ENCODE measurements at regions of chr3 and their contacts with region 1.

Region 1: DNA sequence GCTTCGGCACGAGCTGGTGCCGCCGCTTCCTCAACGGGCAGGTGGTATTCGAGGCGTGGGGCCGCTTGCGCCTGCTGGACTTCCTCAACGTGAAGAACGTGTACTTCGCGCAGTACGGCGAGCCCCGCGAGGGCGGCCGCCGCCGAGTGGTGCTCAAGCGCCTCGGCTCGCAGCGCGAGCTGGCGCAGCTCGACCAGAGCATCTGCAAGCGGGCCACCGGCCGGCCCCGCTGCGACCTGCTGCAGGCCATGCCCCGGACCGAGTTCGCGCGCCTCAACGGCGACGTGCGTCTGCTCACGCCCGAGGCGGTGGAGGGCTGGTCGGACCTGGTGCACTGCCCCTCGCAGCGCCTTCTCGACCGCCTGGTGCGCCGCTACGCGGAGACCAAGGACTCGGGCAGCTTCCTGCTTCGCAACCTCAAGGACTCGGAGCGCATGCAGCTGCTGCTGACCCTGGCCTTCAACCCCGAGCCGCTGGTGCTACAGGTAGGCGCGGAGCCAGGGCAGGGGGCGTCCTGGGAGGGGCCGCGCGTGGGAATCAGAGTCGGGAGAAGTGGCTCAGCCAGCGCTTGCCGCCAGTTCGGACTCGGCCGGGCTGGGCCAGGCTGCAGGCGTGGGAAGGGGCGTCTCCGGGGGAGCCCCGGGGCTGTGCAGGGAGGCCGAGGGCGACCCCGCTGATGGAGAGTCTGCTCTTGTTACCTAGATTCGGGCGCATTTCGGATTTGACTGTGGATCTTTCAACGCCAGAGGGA is 1.1 kb downstream of the DIPK2A start:
- DNase-seq: peak; percentile 49 to 90 (median 78)
- ATAC-seq: peak in 3 of 4 donors; percentile 15 to 56 (median 50)
- H3K4me3 ChIP-seq: peak overlapping the region; percentile 82 to 97 (median 88)
- H3K27ac ChIP-seq: peak overlapping the region; percentile 89 to 99 (median 96)
- H3K4me1 ChIP-seq: peaks cover 0 to 40% (median 17%) of the 10 kb centered on the region in 12 donors
- H3K27me3 ChIP-seq: no peaks in the 10 kb centered on the region
- CTCF ChIP-seq: peak in 11 of 12 donors; percentile 22 to 68 (median 45)
- POLR2A ChIP-seq: no peak

Region 2: DNA sequence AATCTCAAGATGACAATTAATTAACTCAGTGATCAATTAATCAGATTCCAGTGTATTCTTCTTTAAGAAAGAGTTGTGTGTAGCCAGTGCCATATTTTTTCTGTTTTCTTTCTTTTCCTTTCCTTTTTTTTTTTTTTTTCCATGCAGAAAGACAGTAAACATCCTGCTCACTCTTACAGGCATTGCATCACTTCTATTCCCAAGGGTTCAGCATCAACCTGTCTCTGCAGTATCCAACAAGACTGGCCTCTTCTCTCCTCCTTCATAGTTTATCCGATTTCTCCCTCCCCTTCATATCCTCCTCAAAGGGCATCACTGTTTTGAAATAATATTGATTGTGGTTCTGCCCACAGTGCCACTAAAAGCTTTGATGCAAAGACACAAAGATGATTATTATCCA is 107.4 kb before region 1 on chr3:
- intact Hi-C with region 1: no loop called
- DNase-seq: no peak
- ATAC-seq: no peak
- H3K4me3 ChIP-seq: no peak overlapping the region
- H3K27ac ChIP-seq: no peak overlapping the region
- H3K4me1 ChIP-seq: no peaks in the 10 kb centered on the region
- H3K27me3 ChIP-seq: no peaks in the 10 kb centered on the region
- CTCF ChIP-seq: no peak
- POLR2A ChIP-seq: no peak

Region 3: GRCh38 chr3:144265542-144266100 is 292.9 kb after region 1 on chr3:
- intact Hi-C with region 1: loop called in 1 of 10 experiments (anchors 10 kb)
- DNase-seq: peak in 2 of 5 donors; percentile 20 to 25
- ATAC-seq: peak; percentile 57 to 91 (median 72)
- H3K4me3 ChIP-seq: peak overlapping the region in 2 of 12 donors; percentile 2 to 4
- H3K27ac ChIP-seq: peak overlapping the region in 4 of 12 donors; percentile 11 to 51 (median 34)
- H3K4me1 ChIP-seq: peaks cover 0 to 18% (median 3%) of the 10 kb centered on the region in 12 donors
- H3K27me3 ChIP-seq: no peaks in the 10 kb centered on the region
- CTCF ChIP-seq: no peak
- POLR2A ChIP-seq: no peak

Region 4: GRCh38 chr3:144763878-144764454 is 791.3 kb after region 1 on chr3:
- intact Hi-C with region 1: loop called in 2 of 10 experiments (anchors 10 kb)
- DNase-seq: no peak
- ATAC-seq: no peak
- H3K4me3 ChIP-seq: peak overlapping the region in 2 of 12 donors; percentile 4 to 20
- H3K27ac ChIP-seq: no peak overlapping the region
- H3K4me1 ChIP-seq: no peaks in the 10 kb centered on the region
- H3K27me3 ChIP-seq: no peaks in the 10 kb centered on the region
- CTCF ChIP-seq: no peak
- POLR2A ChIP-seq: no peak

Measured in heart left ventricle (tissue), 16 donors.